Lower leg skin (tissue), 4 donors: ENCODE measurements at regions of chr1 and their contacts with region 1.

Region 1: GRCh38 chr1:118479374-118479773 is 294.3 kb upstream of the SPAG17 start:
- DNase-seq: no peak
- H3K4me3 ChIP-seq: no peak overlapping the region
- CTCF ChIP-seq: no peak
- POLR2A ChIP-seq: no peak

Region 2: DNA sequence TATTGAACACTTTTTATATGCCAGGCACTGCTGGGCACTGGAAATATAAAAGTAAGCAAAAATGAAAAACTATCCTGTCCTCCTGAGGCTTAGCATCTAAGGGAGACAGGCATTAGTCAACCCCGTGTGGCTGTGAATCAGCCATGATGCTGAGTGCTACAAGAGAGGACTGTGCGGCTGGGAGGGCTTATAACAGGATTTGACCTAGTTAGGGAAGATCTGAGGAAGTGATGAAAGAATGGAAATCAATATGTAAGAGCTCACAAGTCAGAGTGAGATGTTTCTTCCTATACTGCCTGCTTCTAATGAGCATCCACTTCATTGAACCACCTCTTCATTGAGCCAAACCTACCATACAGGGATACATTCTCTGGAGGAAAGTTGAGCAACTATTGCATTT is 1372.9 kb before region 1 on chr1:
- intact Hi-C with region 1: loop called (anchors 10 kb)
- DNase-seq: no peak
- H3K4me3 ChIP-seq: no peak overlapping the region
- CTCF ChIP-seq: no peak
- POLR2A ChIP-seq: no peak

Region 3: DNA sequence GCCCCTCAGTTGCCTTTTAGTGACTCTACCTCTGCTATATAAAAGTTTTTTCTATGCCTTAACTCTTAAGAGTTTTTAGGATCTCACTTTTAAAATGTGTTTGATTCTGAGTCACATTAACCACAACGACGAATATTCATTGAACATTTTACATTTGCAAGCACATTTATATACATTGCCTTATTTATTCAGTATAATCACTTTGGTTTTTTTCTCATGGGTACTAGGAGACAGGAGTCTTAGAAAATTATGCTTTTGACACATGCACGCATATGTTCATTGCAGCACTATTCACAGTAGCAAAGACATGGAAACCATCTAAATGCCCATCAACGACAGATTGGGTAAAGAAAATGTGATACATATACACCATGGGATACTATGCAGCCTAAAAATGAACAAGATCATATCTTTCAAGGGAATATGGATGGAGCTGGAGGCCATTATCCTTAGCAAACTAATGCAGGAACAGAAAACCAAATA is 57.5 kb before region 1 on chr1:
- intact Hi-C with region 1: loop called (anchors 10 kb)
- DNase-seq: no peak
- H3K4me3 ChIP-seq: no peak overlapping the region
- CTCF ChIP-seq: no peak
- POLR2A ChIP-seq: no peak